Dorsolateral prefrontal cortex (tissue), 120 donors: ENCODE measurements at regions of chr1 and their contacts with region 1.

Region 1: GRCh38 chr1:24502709-24503058 is at the start of gene RCAN3:
- DNase-seq: peak; percentile 55 to 81 (median 64)
- H3K4me3 ChIP-seq: peak within 1 kb of the TSS; percentile 39 to 84 (median 68)
- H3K27ac ChIP-seq: peak within 1 kb of the TSS in 54 of 59 donors; percentile 29 to 92 (median 79)
- H3K27me3 ChIP-seq: peaks cover 0 to 46% (median 7%) of the 10 kb centered on the region in 45 donors
- CTCF ChIP-seq: peak in 2 of 56 donors; percentile 17 to 24
- total RNA-seq, gene RCAN3: 2.3 to 12.6 (median 5.5) TPM

Region 2: GRCh38 chr1:24415334-24415909 is 87.3 kb before region 1 on chr1 and contains the start of gene NIPAL3:
- intact Hi-C with region 1: loop called in 1 of 2 experiments (anchors 5 kb)
- DNase-seq: peak; percentile 91 to 98 (median 97)
- H3K4me3 ChIP-seq: peak within 1 kb of the TSS; percentile 57 to 98 (median 78)
- H3K27ac ChIP-seq: peak within 1 kb of the TSS in 58 of 59 donors; percentile 36 to 90 (median 78)
- H3K27me3 ChIP-seq: no peaks in the 10 kb centered on the region
- CTCF ChIP-seq: peak; percentile 49 to 85 (median 69)
- total RNA-seq, gene NIPAL3: 61.8 to 202 (median 104) TPM

Region 3: GRCh38 chr1:24443241-24443656 is 59.4 kb before region 1 on chr1:
- intact Hi-C with region 1: loop called in 1 of 2 experiments (anchors 5 kb)
- DNase-seq: no peak
- H3K4me3 ChIP-seq: peak overlapping the region in 2 of 59 donors; percentile 31 to 38
- H3K27ac ChIP-seq: peak overlapping the region in 55 of 59 donors; percentile 27 to 96 (median 86)
- H3K27me3 ChIP-seq: no peaks in the 10 kb centered on the region
- CTCF ChIP-seq: peak in 4 of 56 donors; percentile 2 to 19 (median 8)

Region 4: GRCh38 chr1:24806588-24806987 is 303.9 kb after region 1 on chr1:
- intact Hi-C with region 1: no loop called
- DNase-seq: no peak
- H3K4me3 ChIP-seq: no peak overlapping the region
- H3K27ac ChIP-seq: peak overlapping the region in 16 of 59 donors; percentile 0 to 53 (median 26)
- H3K27me3 ChIP-seq: no peaks in the 10 kb centered on the region
- CTCF ChIP-seq: no peak